Panc1 (cell line): ENCODE measurements at regions of chr15 and their contacts with region 1.

Region 1: DNA sequence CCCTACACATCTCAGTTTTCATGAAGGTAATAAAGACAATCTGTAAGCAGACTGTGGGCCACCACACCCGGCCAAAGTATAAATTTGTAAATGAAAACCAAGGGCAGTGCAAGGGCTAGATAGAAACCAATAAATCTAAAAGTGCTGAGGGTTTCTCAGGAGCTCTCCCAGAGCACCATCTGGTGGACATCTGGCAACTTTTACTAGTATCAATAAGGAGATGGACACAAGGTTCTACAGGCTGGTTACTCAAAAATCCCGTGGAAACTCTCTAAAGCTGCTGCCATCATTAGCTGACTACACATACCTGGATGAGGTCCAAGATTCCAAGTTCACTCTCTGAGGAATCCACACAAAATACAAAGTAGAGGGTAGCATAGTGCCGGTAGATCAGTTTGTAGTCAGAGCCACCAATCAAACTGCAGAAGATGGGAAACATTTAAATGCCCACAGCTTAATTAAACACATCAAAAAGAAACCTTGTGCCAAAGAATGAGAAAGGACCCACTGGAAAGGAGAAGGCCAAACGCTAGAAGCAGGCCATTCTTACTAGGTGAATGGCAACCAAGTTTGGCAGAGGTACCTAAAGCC is 5.5 kb downstream of the AP3S2 start:
- DNase-seq: no peak
- ATAC-seq: peak; percentile 79
- H3K4me3 ChIP-seq: no peak overlapping the region
- H3K27ac ChIP-seq: no peak overlapping the region
- H3K4me1 ChIP-seq: no peaks in the 10 kb centered on the region
- H3K27me3 ChIP-seq: no peaks in the 10 kb centered on the region
- CTCF ChIP-seq: peak; percentile 79

Region 2: DNA sequence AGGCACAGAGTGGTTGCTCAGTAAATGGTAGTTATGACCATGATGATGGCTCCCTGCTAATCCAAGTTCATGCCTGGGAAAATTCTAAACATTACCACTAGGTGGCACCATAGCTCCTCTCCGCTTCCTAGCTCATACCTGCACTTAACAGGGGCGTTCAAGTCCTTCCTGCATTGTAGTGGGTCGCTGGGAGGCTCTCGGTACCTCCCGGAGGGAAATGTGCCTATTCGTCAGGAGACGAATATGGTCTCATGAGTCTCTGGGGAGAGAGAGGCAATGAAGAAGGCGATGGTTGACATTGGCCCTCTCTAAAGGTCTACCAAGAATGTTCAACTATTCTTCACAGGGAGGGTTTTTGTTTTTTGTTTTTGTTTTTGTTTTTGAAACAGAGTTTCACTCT is 148.2 kb before region 1 on chr15:
- CTCF ChIA-PET with region 1: interaction called, 15 read pairs
- POLR2A ChIA-PET with region 1: interaction called, 3 read pairs
- in situ Hi-C with region 1: no loop called
- intact Hi-C with region 1: loop called (anchors 5 kb)
- DNase-seq: peak; percentile 72
- ATAC-seq: peak; percentile 96
- H3K4me3 ChIP-seq: no peak overlapping the region; a peak in 1 of 4 replicates
- H3K27ac ChIP-seq: no peak overlapping the region
- H3K4me1 ChIP-seq: no peaks in the 10 kb centered on the region
- H3K27me3 ChIP-seq: no peaks in the 10 kb centered on the region
- CTCF ChIP-seq: peak; percentile 94